ENCODE measurements at regions of chr11 and their contacts with region 1.

Region 1: GRCh38 chr11:94897330-94897768 is 76.0 kb downstream of the CWC15 start:
- DNase-seq: peak in 1 of 2 donors; percentile 56
- ATAC-seq: peak; percentile 53

Region 2: DNA sequence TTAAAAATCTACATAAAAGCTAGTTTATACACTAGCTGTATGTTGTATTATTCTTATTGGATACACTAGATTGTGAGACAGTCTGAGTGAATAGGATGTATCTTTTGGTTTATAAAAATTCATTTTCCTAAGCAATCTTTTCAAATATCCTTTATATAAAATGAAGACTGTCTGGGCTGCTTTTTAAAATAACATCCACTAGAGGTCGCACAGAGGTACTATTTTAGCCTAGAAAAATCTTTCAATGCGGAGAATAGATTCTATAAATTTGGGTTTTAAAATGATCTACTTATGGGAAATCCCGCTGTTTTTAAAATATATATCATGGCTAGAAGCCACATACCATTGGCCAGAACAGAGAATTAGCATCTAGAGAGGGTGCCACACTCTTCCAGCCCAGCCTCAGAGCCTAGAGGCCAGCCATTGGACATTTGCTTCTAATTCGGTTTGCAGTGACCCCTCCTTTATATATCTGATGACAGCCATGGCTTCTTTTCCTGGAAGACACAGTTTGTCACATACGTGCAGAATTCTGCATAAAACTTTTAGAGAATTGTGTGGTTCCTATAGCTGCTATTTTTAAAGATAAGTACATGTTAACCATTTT is 377.8 kb before region 1 on chr11:
- intact Hi-C with region 1: loop called in 1 of 2 experiments (anchors 10 kb)
- DNase-seq: no peak
- ATAC-seq: peak; percentile 56

Region 3: DNA sequence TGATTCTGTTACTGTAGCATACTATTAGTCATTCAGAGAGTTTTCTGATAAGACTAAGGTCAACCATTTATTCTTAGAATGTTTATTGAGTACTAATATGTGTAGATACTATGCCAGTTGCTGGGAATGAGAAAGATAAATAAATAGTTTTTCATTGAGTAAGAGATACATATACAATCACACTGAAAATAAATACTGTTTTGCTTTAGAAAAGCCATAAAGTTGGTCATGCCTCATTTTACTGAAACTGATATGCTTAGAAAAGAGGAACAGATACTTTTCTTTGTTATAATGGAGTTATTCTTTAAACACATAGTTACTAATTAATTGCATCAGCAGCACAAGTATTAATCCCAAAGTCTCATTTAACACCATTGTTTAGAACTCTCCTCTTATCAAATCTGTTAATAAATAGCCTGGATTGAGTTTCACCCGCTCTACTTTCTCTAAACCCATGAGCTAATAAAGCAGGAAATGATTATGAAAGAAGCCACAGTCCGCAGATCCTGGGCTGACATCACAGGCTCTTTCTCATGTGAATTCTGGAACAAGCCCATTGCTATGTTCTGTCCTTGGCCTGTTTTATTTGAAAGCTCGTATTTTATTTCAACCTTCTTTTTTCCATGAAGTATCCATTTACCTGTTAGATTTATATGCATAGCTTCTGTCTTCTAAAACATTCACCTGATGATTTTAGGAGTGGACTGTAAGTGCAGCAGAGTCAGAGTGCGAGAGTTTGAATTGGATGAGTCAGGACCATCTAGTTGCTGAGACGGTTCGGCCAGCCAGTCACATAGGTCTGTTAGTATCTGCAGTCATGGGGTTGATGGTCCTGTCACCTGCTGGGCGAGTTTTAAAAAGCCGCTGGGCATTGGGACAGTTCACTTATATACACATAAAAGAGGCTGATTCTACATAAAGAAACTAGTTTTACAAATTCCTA is 294.6 kb before region 1 on chr11:
- intact Hi-C with region 1: no loop called
- DNase-seq: peak in 1 of 2 donors; percentile 74
- ATAC-seq: no peak

Region 4: DNA sequence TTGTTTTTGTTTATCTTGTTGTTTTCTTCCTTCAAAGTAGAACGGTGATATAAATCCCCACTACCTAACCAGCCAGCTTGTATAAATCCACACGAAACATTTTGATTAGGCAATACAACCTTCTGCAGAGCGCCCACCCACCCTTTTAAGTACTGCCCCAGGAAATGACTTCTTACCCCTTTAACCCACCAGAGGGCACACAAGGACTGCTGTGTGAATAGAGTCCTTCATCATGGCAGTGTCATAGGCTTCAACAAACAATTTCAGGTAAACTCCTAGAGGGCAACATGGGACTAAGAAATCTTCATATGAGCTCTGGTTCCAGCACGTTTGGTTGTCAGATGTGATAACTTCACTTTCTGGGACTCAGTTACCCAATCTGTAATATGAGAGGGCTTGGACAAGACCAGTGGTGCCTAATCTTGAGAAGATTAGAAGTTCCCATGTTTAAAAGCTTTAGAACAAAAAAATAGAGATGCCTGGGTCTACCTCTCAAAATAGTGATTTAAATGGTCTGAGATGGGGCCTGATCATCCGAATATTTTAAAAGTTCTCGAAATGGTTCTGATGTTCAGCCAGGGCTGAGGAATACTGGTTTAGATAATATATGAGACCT is 274.1 kb before region 1 on chr11:
- intact Hi-C with region 1: loop called in 1 of 2 experiments (anchors 5 kb)
- DNase-seq: peak in 1 of 2 donors; percentile 26
- ATAC-seq: peak; percentile 86